Naive thymus-derived CD4-positive, alpha-beta T cell (primary cell): ENCODE measurements at regions of chr19 and their contacts with region 1.

Region 1: DNA sequence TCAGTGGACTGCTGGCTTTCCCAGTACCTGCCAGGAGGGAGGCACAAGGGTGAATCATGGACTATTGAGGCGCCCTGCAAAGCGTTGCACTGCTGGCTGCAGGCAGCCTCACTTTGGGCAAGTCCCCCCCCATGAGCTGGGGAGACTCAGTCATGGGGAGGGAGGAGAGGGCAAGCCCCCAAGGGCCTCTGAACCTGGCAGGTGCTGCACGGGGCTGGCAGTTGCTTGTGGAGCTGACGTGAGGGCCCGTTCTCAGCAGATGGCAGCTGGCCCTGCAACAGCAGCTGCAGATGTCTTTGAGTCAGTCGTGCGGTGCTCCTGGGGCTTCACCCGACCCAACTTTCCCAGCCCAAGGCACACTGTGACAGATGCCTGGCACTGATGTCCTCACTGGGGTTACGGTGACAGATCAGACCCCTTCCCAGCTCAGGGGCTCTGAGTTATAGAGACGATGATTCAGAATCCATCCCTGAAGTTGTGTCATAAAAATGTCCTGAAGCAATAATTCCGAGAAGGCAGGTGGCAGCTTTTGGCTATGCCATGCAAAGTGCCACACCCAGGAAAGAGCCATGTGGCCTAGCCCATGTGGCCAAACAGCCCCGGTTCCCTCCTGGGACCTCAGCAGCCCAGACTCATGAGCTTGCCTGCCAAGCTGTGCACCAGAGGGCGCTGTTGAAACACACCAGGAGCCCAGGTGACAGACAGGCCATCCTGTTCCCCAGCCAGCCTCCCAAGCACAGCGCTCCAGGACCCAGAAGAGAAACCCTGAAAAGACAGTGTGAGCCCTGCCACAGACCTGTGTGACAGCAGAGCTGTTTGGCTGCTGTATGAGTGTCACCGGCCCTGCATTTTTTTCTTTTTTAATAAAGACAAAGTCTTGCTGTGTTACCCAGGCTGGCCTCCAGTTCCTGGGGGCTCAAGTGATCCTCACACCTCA is 53.6 kb upstream of the LDLR start:
- DNase-seq: peak; percentile 63 to 84 (median 75)
- ATAC-seq: peak; percentile 95
- H3K4me3 ChIP-seq: no peak overlapping the region
- H3K4me3 Mint-ChIP-seq: no peak overlapping the region
- H3K27ac ChIP-seq: no peak overlapping the region
- H3K27ac Mint-ChIP-seq: peak overlapping the region in 6 of 9 donors; percentile 14 to 50 (median 28)
- H3K4me1 ChIP-seq: no peaks in the 10 kb centered on the region
- H3K4me1 Mint-ChIP-seq: peaks cover 3 to 7% (median 5%) of the 10 kb centered on the region in 7 donors
- H3K27me3 ChIP-seq: no peaks in the 10 kb centered on the region
- H3K27me3 Mint-ChIP-seq: no peaks in the 10 kb centered on the region

Region 2: DNA sequence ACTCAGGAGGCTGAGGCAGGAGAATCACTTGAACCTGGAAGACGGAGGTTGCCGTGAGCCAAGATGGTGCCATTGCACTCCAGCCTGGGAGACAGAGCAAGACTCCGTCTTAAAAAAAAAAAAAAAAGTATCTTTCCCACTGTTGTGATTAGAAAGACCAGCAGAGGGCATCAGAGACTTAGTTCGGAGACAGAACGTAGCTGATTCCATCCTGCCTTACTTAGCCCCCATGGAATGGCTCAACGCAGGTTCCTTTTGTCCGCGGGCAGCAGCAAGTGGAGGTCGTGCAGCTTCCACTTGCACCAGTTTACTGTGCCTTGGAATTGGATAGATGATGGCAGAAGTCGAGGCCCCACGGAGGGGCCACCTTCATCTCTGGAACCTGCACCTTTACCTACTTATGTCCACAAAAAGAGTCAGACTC is 99.0 kb before region 1 on chr19:
- CTCF ChIA-PET with region 1: interaction called, 6 read pairs
- POLR2A ChIA-PET with region 1: no interaction called
- intact Hi-C with region 1: loop called in 1 of 2 experiments (anchors 5 kb)
- DNase-seq: peak in 7 of 9 donors; percentile 40 to 69 (median 62)
- ATAC-seq: peak; percentile 89
- H3K4me3 ChIP-seq: no peak overlapping the region
- H3K4me3 Mint-ChIP-seq: peak overlapping the region in 4 of 10 donors; percentile 5 to 48 (median 38)
- H3K27ac ChIP-seq: no peak overlapping the region
- H3K27ac Mint-ChIP-seq: peak overlapping the region in 2 of 9 donors; percentile 34 to 55
- H3K4me1 ChIP-seq: no peaks in the 10 kb centered on the region
- H3K4me1 Mint-ChIP-seq: peaks cover 0 to 13% (median 8%) of the 10 kb centered on the region in 7 donors
- H3K27me3 ChIP-seq: no peaks in the 10 kb centered on the region
- H3K27me3 Mint-ChIP-seq: no peaks in the 10 kb centered on the region

Region 3: DNA sequence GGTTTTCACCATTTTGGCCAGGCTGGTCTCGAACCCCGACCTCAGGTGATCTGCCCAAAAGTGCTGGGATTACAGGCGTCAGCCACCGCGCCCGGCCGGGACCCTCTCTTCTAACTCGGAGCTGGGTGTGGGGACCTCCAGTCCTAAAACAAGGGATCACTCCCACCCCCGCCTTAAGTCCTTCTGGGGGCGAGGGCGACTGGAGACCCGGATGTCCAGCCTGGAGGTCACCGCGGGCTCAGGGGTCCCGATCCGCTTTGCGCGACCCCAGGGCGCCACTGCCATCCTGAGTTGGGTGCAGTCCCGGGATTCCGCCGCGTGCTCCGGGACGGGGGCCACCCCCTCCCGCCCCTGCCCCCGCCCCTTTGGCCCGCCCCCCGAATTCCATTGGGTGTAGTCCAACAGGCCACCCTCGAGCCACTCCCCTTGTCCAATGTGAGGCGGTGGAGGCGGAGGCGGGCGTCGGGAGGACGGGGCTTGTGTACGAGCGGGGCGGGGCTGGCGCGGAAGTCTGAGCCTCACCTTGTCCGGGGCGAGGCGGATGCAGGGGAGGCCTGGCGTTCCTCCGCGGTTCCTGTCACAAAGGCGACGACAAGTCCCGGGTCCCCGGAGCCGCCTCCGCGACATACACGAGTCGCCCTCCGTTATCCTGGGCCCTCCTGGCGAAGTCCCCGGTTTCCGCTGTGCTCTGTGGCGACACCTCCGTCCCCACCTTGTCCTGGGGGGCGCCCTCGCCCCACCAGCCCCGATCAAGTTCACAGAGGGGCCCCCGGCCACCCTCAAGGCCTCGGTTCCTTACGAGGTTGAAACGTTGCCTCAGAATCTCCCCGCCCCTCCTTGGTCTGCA is 54.6 kb after region 1 on chr19:
- CTCF ChIA-PET with region 1: interaction called, 44 read pairs
- POLR2A ChIA-PET with region 1: interaction called, 11 read pairs
- intact Hi-C with region 1: loop called (anchors 1 to 2 kb)
- DNase-seq: peak; percentile 89 to 97 (median 96)
- ATAC-seq: peak; percentile 90
- H3K4me3 ChIP-seq: peak overlapping the region; percentile 83
- H3K4me3 Mint-ChIP-seq: peak overlapping the region; percentile 85 to 94 (median 89)
- H3K27ac ChIP-seq: peak overlapping the region; percentile 91
- H3K27ac Mint-ChIP-seq: peak overlapping the region; percentile 88 to 99 (median 96)
- H3K4me1 ChIP-seq: peaks cover 24 to 41% of the 10 kb centered on the region in 2 donors
- H3K4me1 Mint-ChIP-seq: peaks cover 13 to 51% (median 44%) of the 10 kb centered on the region in 7 donors
- H3K27me3 ChIP-seq: no peaks in the 10 kb centered on the region
- H3K27me3 Mint-ChIP-seq: peaks cover 0 to 2% (median 0%) of the 10 kb centered on the region in 5 donors

Region 4: DNA sequence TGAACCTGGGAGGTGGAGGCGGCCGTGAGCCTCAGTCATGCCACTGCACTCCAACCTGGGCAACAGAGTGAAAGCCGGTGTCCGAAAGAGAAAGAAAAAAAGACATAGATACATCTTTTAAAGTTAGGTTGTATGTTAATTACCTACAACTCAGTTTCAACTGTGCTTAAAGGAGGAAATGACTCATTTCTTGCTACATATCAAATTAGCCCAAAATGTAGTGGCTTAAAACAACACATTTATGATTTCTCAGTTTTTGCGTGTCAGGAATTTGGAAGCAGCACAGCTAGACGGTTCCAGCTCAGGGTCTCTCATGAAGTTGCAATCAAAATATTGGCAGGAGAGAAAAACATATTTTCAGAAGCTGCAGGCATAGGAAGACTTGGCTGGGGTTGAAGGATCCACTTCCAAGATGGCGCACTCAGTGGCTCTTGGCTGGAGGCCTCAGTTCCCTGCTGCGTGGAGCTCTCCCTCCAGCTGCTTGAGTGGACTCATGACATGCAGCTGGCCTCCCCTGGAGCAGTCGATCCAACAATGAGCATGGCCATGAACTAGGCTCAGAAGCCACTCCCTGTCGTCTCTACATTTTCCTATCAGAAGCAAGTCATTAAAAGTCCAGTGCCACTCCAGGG is 60.6 kb after region 1 on chr19:
- CTCF ChIA-PET with region 1: interaction called, 44 read pairs
- POLR2A ChIA-PET with region 1: interaction called, 5 read pairs
- intact Hi-C with region 1: loop called in 1 of 2 experiments (anchors 1 kb)
- DNase-seq: peak in 1 of 9 donors; percentile 39
- ATAC-seq: peak; percentile 11
- H3K4me3 ChIP-seq: peak overlapping the region; percentile 56
- H3K4me3 Mint-ChIP-seq: peak overlapping the region; percentile 48 to 84 (median 68)
- H3K27ac ChIP-seq: peak overlapping the region; percentile 50
- H3K27ac Mint-ChIP-seq: peak overlapping the region; percentile 82 to 96 (median 90)
- H3K4me1 ChIP-seq: peaks cover 33 to 47% of the 10 kb centered on the region in 2 donors
- H3K4me1 Mint-ChIP-seq: peaks cover 28 to 66% (median 45%) of the 10 kb centered on the region in 7 donors
- H3K27me3 ChIP-seq: no peaks in the 10 kb centered on the region
- H3K27me3 Mint-ChIP-seq: no peaks in the 10 kb centered on the region

Region 5: DNA sequence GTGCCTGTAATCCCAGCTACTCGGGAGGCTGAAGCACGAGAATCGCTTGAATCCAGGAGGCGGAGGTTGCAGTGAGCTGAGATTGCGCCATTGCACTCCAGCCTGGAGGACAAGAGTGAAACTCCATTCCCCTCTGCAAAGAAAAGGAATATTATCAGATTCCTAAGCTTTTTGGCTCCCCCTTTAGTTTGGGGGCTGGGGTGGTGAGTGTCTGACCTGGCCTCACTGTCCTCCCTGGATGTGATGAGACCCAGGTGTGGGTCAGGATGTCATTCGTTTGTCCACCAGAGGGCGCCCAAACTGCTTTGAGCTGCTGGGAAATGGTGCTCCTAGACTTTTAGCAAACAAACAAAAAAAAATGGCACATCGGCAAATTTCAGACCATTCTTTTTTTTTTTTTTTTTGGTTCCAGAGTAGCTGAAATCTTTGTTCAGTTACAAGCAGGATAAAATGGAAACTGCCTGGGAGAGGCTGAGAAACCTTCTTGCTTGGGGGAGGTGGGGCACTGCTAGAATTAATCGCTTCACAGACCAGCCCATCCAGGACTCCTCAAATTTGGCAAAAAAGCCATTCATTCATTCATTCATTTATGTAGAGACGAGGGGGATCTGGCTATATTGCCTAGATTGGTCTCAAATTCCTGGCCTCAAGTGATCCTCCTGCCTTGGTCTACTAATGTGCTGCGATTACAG is 90.4 kb after region 1 on chr19:
- CTCF ChIA-PET with region 1: interaction called, 32 read pairs
- POLR2A ChIA-PET with region 1: interaction called, 5 read pairs
- intact Hi-C with region 1: loop called (anchors 1 kb)
- DNase-seq: peak; percentile 33 to 73 (median 62)
- ATAC-seq: peak; percentile 77
- H3K4me3 ChIP-seq: no peak overlapping the region
- H3K4me3 Mint-ChIP-seq: no peak overlapping the region
- H3K27ac ChIP-seq: no peak overlapping the region
- H3K27ac Mint-ChIP-seq: peak overlapping the region in 3 of 9 donors; percentile 23 to 72 (median 48)
- H3K4me1 ChIP-seq: no peaks in the 10 kb centered on the region
- H3K4me1 Mint-ChIP-seq: peaks cover 0 to 9% (median 5%) of the 10 kb centered on the region in 7 donors
- H3K27me3 ChIP-seq: no peaks in the 10 kb centered on the region
- H3K27me3 Mint-ChIP-seq: no peaks in the 10 kb centered on the region

Region 6: GRCh38 chr19:11203194-11204075 is 167.7 kb after region 1 on chr19:
- CTCF ChIA-PET with region 1: interaction called, 15 read pairs
- POLR2A ChIA-PET with region 1: no interaction called
- intact Hi-C with region 1: loop called (anchors 1 to 5 kb)
- DNase-seq: peak in 4 of 9 donors; percentile 7 to 44 (median 21)
- ATAC-seq: peak; percentile 65
- H3K4me3 ChIP-seq: no peak overlapping the region
- H3K4me3 Mint-ChIP-seq: no peak overlapping the region
- H3K27ac ChIP-seq: no peak overlapping the region
- H3K27ac Mint-ChIP-seq: no peak overlapping the region
- H3K4me1 ChIP-seq: no peaks in the 10 kb centered on the region
- H3K4me1 Mint-ChIP-seq: peaks cover 0 to 3% (median 0%) of the 10 kb centered on the region in 7 donors
- H3K27me3 ChIP-seq: no peaks in the 10 kb centered on the region
- H3K27me3 Mint-ChIP-seq: peaks cover 0 to 19% (median 7%) of the 10 kb centered on the region in 5 donors